Body of pancreas (tissue), 4 donors: ENCODE measurements at regions of chr16 and their contacts with region 1.

Region 1: DNA sequence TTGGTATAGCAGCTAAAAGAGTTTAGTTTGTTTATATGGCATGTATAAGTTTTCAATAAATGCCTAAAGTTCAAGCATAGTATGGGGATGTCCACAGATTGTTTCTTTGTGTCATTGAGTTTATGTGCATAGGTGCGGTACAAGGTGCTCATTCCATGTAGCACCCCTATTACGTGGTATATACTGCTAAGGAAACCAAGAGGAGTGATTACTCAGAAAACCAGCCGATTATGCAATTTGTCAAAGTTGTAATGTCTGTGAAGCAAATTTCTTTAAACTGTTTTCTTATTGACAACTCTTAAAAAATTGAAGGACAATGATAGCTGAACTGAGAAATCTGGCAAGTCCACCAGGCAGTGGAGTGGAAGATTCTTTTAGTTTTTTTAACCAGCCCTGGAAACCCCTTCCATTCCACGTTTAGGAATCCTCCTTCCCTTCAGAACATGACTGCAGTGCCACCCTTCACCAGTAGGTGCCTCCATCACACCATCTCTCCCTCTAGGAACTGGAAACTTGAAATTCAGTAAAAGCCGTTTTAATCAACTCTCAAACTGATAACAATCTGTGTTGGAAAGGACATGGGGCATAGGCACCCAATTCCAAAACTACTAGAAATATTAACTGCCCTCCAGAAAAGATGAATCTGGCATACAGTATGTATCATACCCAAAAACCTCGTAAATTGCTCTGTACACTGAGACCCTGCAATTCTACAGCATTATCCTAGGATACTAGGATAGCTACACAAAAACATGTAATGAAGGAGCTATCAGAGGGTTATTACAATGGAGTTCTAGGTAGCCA is 43.5 kb downstream of the REXO5 start:
- DNase-seq: peak; percentile 64 to 77 (median 71)
- ATAC-seq: peak; percentile 67
- H3K4me3 ChIP-seq: no peak overlapping the region
- H3K27ac ChIP-seq: peak overlapping the region in 3 of 4 donors; percentile 1 to 72 (median 24)
- H3K4me1 ChIP-seq: peaks cover 20% of the 10 kb centered on the region
- H3K27me3 ChIP-seq: no peaks in the 10 kb centered on the region
- CTCF ChIP-seq: peak; percentile 89 to 98 (median 95)
- POLR2A ChIP-seq: no peak

Region 2: DNA sequence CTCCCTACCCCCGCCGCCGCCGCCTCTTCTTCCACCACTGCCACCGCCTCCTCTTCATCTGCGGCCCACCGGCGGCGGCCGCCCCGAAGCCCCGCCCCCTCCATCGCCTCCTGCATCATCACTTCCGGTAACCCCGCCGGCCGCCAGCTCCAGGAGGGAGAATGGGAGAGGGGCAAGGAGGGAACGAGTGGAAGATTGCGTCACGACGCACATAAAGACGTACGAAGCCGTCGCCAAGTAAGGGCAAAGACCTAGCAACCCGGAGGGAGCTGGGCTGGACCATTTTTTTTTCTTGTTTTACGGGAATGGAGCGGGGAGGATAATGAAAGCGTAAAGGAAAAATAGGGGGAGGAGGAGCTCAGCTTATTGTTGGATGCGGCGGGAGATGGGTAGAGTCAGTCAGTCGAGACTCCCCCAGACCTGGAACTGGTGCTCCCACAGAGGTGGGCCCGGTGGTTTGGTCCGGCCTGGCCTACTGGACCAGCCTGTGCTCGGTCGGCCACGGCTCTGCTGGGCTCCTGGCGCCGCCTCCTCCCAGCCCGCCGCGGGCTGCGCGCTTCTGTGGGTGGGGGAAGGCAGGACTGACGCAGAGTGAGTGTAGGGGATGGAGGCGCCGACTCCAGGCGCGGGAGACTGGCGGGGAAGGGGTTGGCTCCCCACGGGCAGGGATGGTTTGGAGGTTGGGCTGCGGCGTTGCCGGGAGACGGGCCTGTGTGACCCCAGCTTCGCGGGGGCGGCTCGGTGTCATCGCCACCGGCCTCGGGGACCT is 50.7 kb after region 1 on chr16 and contains the starts of genes DCUN1D3 and LYRM1:
- intact Hi-C with region 1: loop called (anchors 10 kb)
- DNase-seq: peak; percentile 94 to 98 (median 96)
- ATAC-seq: peak; percentile 92
- H3K4me3 ChIP-seq: peak within 1 kb of the TSS; percentile 45 to 59
- H3K27ac ChIP-seq: peak within 1 kb of the TSS; percentile 90 to 97 (median 95)
- H3K4me1 ChIP-seq: peaks cover 71% of the 10 kb centered on the region
- H3K27me3 ChIP-seq: no peaks in the 10 kb centered on the region
- CTCF ChIP-seq: no peak
- POLR2A ChIP-seq: peak; percentile 87 to 95 (median 94)
- total RNA-seq, gene DCUN1D3: 7.5 to 14.5 TPM
- total RNA-seq, gene LYRM1: 13.5 to 18.9 TPM

Region 3: DNA sequence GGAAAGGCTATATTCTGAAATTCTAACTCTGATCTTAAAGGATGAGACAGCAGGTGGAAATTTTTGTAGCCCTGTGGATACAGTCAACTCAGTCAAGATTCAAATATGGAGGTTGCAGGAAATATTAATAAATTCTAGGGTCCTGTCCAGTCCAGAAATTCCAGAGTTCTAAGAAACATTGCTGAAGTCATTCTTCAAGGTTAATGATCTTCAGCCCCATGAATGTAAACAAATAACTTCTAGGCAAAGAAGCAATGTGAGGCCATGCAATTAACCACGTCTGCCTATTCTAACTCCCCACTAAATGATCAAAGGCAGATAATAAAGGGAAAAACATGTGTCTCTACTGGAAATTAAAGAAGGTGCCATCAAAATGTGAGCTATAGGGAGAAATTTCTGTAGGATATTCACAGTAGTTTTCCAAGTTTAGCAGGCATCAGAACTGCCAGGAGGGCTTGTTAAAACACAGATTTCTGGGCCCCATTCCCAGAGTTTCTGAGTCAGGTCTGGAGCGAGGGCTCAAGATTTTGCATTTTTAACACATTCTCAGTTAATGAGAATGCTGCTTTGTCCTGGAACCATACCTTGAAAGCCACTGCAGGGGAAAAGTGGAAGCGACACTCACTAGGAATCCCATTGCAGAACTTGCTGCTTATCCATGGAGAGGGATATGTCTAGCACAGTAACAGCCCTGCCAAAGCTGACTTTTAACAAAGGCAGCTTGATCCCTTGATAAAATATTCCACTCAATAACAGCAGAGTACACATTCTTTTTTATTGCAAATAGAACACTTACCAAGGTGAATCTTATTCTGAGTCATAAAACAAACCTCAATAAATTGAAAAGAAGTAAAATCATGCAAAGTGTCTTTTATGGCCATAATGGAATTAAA is 239.1 kb after region 1 on chr16:
- intact Hi-C with region 1: loop called (anchors 5 kb)
- DNase-seq: no peak
- ATAC-seq: no peak
- H3K4me3 ChIP-seq: no peak overlapping the region
- H3K27ac ChIP-seq: no peak overlapping the region
- H3K4me1 ChIP-seq: no peaks in the 10 kb centered on the region
- H3K27me3 ChIP-seq: no peaks in the 10 kb centered on the region
- CTCF ChIP-seq: no peak
- POLR2A ChIP-seq: no peak

Region 4: DNA sequence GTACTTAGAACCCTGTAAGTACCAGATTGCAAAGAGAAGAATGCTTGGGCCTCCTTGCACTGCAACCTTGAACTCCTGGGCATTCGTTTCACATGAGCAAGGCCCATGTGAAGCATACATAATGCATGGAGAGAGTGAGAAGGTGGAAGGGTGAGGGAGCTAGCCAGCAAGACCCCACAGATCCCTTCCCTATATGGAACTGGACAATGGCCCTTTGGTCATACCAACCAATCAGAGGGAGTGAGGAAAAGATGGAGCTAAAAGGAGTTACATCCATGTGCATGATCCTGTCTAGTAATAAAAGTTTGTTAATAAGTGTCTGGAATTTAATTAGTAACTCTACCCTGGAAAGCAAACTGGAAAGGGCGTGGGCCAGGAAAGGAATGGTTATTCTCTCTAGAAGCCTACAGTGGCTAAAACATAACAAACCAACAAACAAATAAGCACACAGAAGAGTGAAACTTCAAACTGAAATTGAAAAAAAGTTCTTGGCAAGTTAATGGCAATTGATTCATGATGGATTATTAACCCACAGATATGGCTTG is 271.3 kb after region 1 on chr16:
- intact Hi-C with region 1: no loop called
- DNase-seq: no peak
- ATAC-seq: no peak
- H3K4me3 ChIP-seq: no peak overlapping the region
- H3K27ac ChIP-seq: no peak overlapping the region
- H3K4me1 ChIP-seq: no peaks in the 10 kb centered on the region
- H3K27me3 ChIP-seq: no peaks in the 10 kb centered on the region
- CTCF ChIP-seq: no peak
- POLR2A ChIP-seq: no peak

Region 5: GRCh38 chr16:21162661-21163151 is 312.9 kb after region 1 on chr16:
- intact Hi-C with region 1: no loop called
- DNase-seq: peak; percentile 18 to 67 (median 50)
- ATAC-seq: no peak
- H3K4me3 ChIP-seq: no peak overlapping the region
- H3K27ac ChIP-seq: peak overlapping the region in 3 of 4 donors; percentile 29 to 62 (median 41)
- H3K4me1 ChIP-seq: peaks cover 40% of the 10 kb centered on the region
- H3K27me3 ChIP-seq: no peaks in the 10 kb centered on the region
- CTCF ChIP-seq: no peak
- POLR2A ChIP-seq: no peak